ENCODE measurements at regions of chr22 and their contacts with region 1.

Region 1: DNA sequence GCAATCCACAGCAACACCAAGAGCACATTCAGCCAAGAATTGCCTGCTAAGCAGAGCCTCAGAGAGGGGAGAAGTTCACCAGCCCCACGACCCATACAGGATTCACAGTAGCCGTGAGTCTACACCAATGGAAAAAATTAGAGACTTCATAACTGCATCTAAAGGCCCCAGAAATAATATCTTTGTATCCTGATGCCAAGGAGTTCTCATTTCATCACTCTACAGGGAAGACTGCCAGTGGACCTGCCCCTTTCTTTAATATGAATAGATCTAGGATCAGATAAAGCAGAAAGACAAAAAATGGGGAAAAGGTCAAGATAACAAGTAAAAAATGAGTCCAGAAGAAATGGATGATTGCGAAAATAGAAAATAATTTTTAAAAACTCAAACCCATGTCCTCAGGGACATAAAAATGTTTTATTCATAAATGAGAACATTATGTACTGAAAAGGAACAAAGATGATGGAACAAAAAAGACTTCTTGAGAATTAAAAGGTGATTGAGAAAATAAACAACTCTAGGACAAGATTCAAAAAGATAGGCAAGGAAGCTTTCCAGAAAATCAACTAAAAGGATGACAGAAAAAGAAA is 9.5 kb downstream of the APOL3 start:
- DNase-seq: peak; percentile 28
- H3K4me3 Mint-ChIP-seq: no peak overlapping the region
- H3K27ac Mint-ChIP-seq: peak overlapping the region; percentile 85
- H3K4me1 Mint-ChIP-seq: peaks cover 30% of the 10 kb centered on the region
- H3K27me3 Mint-ChIP-seq: no peaks in the 10 kb centered on the region
- CTCF ChIP-seq: no peak

Region 2: GRCh38 chr22:36048911-36049677 is 102.0 kb before region 1 on chr22:
- CTCF ChIA-PET with region 1: no interaction called
- POLR2A ChIA-PET with region 1: no interaction called
- intact Hi-C with region 1: no loop called
- DNase-seq: peak; percentile 23
- H3K4me3 Mint-ChIP-seq: no peak overlapping the region
- H3K27ac Mint-ChIP-seq: no peak overlapping the region
- H3K4me1 Mint-ChIP-seq: peaks cover 7% of the 10 kb centered on the region
- H3K27me3 Mint-ChIP-seq: no peaks in the 10 kb centered on the region
- CTCF ChIP-seq: no peak

Region 3: DNA sequence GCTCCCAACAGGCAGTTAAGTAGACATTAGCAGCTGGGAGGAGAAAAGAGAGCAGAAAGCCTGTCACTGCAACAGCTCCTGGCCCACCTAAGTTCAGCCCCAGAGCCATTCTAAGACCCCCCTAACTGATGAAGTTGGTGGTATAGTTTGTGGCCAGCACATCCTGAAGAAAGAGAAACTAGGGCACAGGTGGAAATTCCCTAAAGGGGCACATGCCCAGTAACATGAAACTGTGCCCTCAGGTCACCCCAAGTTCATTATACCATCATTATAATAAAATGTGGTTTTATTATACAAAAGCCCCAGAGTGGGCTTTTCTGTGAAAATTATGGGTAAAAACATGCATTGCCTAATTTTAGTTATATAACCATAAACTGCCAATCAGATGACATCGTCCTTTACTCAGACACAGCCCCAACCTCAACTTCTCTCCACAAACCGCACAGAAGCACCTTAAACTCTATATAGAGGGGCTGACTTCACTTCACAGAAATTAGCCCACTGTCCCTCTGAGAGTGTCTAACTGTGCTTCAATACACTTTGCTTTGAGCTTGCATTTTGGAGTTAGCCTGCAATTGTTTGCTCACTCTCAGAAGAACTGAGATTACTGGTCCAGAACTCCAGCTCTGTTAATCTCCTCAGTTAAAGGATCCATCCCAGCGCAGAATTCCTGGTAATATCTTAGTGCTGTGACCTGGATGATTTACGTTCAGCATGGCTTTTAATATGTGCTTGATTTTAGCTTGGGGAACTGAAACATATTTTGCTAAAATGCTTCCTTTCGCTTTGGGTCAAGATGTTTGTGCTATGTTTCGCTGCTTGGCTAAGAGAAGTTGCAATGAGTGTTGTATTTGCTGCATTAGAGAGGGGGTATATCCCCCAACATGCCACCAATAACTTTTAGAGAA is 11.3 kb after region 1 on chr22:
- CTCF ChIA-PET with region 1: no interaction called
- POLR2A ChIA-PET with region 1: interaction called, 13 read pairs
- intact Hi-C with region 1: no loop called
- DNase-seq: no peak
- H3K4me3 Mint-ChIP-seq: no peak overlapping the region
- H3K27ac Mint-ChIP-seq: no peak overlapping the region
- H3K4me1 Mint-ChIP-seq: peaks cover 15% of the 10 kb centered on the region
- H3K27me3 Mint-ChIP-seq: peaks cover 32% of the 10 kb centered on the region
- CTCF ChIP-seq: no peak

Region 4: DNA sequence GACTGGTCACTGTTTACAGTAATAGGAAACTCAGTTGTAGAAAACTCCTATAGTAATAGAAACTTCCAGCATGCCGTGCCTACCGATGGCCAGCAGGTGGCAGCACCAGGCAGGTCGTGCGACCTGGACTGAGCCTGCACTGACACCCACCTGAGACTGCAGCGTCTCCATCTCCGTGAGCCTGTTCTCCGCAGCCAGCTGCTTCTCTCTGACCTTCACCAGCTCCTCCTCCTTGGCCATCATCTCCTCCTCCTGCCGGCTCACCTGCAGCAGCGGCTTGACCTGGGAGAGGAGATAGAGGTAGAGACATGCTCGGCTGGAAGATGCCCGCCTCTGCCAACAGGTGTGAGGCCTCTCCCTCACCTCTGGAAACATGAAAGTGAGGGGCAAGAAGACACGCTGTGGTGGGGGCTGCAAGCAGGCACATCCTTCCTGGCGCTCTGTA is 150.3 kb after region 1 on chr22:
- CTCF ChIA-PET with region 1: no interaction called
- POLR2A ChIA-PET with region 1: no interaction called
- intact Hi-C with region 1: no loop called
- DNase-seq: peak; percentile 73
- H3K4me3 Mint-ChIP-seq: no peak overlapping the region
- H3K27ac Mint-ChIP-seq: no peak overlapping the region
- H3K4me1 Mint-ChIP-seq: peaks cover 7% of the 10 kb centered on the region
- H3K27me3 Mint-ChIP-seq: no peaks in the 10 kb centered on the region
- CTCF ChIP-seq: peak; percentile 94

Region 5: GRCh38 chr22:36385491-36386350 is 234.6 kb after region 1 on chr22:
- CTCF ChIA-PET with region 1: no interaction called
- POLR2A ChIA-PET with region 1: no interaction called
- intact Hi-C with region 1: no loop called
- DNase-seq: peak; percentile 95
- H3K4me3 Mint-ChIP-seq: peak overlapping the region; percentile 91
- H3K27ac Mint-ChIP-seq: peak overlapping the region; percentile 94
- H3K4me1 Mint-ChIP-seq: peaks cover 29% of the 10 kb centered on the region
- H3K27me3 Mint-ChIP-seq: no peaks in the 10 kb centered on the region
- CTCF ChIP-seq: no peak

Measured in MCF 10A (cell line).